Naive thymus-derived CD4-positive, alpha-beta T cell (primary cell): ENCODE measurements at regions of chr1 and their contacts with region 1.

Region 1: GRCh38 chr1:206925106-206925736 is 3.5 kb upstream of the FCMR start:
- DNase-seq: peak in 3 of 9 donors; percentile 25 to 38 (median 37)
- ATAC-seq: peak; percentile 62
- H3K4me3 ChIP-seq: no peak overlapping the region
- H3K4me3 Mint-ChIP-seq: no peak overlapping the region
- H3K27ac ChIP-seq: peak overlapping the region; percentile 90
- H3K27ac Mint-ChIP-seq: no peak overlapping the region
- H3K4me1 ChIP-seq: peaks cover 46 to 51% of the 10 kb centered on the region in 2 donors
- H3K4me1 Mint-ChIP-seq: peaks cover 19 to 37% (median 31%) of the 10 kb centered on the region in 7 donors
- H3K27me3 ChIP-seq: no peaks in the 10 kb centered on the region
- H3K27me3 Mint-ChIP-seq: no peaks in the 10 kb centered on the region

Region 2: DNA sequence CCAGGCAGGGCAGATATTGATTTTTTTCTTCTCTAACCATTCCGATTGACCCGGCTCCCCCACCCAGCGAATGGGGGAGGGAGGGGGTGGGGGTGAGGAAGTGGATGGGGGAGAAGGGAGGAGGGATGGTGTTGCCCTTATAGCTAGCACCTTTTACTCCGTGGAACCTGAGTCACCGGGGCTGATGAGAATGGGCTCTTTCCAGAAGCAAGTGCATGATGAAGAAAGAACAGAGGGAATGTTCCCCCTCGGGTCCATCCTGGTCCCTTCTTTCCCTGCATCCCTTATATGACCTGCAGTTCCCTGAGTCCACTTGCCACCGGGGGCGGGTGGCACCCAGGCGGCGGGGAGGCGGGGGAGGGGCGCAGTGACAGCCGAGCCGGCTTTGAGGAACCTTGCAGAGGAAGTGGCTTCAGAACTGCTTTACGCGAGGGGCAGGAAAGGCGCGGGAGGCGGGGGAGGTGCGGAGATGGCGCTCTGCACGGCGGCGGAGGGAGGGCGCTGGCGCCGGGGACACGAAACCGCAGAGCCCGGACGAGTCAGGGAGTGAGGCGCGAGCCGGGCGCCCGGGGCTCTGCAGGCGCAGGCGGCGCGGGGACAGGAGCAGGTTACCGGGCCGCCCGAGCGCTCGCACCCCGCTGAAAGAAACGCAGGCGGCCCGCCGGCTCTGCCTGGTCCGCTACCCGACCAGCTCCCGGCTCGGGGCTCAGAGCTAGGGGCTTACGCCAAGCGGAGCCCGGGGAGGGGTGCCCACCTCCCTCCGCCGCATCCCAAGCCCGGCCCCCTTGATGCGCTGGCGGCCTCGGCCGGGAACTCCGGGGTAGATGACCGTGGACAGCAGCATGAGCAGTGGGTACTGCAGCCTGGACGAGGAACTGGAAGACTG is 368.2 kb before region 1 on chr1:
- CTCF ChIA-PET with region 1: no interaction called
- POLR2A ChIA-PET with region 1: interaction called, 5 read pairs
- intact Hi-C with region 1: loop called in 1 of 2 experiments (anchors 5 kb)
- DNase-seq: peak; percentile 78 to 93 (median 88)
- ATAC-seq: peak; percentile 86
- H3K4me3 ChIP-seq: peak overlapping the region; percentile 90
- H3K4me3 Mint-ChIP-seq: peak overlapping the region; percentile 77 to 99 (median 96)
- H3K27ac ChIP-seq: peak overlapping the region; percentile 90
- H3K27ac Mint-ChIP-seq: peak overlapping the region; percentile 86 to 100 (median 94)
- H3K4me1 ChIP-seq: peaks cover 61 to 66% of the 10 kb centered on the region in 2 donors
- H3K4me1 Mint-ChIP-seq: peaks cover 59 to 75% (median 70%) of the 10 kb centered on the region in 7 donors
- H3K27me3 ChIP-seq: no peaks in the 10 kb centered on the region
- H3K27me3 Mint-ChIP-seq: no peaks in the 10 kb centered on the region

Region 3: GRCh38 chr1:206734499-206735142 is 190.6 kb before region 1 on chr1:
- CTCF ChIA-PET with region 1: interaction called, 50 read pairs
- POLR2A ChIA-PET with region 1: interaction called, 10 read pairs
- intact Hi-C with region 1: no loop called
- DNase-seq: peak; percentile 63 to 87 (median 76)
- ATAC-seq: peak; percentile 80
- H3K4me3 ChIP-seq: no peak overlapping the region
- H3K4me3 Mint-ChIP-seq: peak overlapping the region in 4 of 10 donors; percentile 7 to 54 (median 26)
- H3K27ac ChIP-seq: no peak overlapping the region
- H3K27ac Mint-ChIP-seq: peak overlapping the region; percentile 53 to 95 (median 87)
- H3K4me1 ChIP-seq: peaks cover 49 to 50% of the 10 kb centered on the region in 2 donors
- H3K4me1 Mint-ChIP-seq: peaks cover 40 to 60% (median 56%) of the 10 kb centered on the region in 7 donors
- H3K27me3 ChIP-seq: no peaks in the 10 kb centered on the region
- H3K27me3 Mint-ChIP-seq: no peaks in the 10 kb centered on the region

Region 4: GRCh38 chr1:206814716-206815341 is 110.4 kb before region 1 on chr1:
- CTCF ChIA-PET with region 1: interaction called, 20 read pairs
- POLR2A ChIA-PET with region 1: interaction called, 13 read pairs
- intact Hi-C with region 1: no loop called
- DNase-seq: no peak
- ATAC-seq: peak; percentile 38
- H3K4me3 ChIP-seq: no peak overlapping the region
- H3K4me3 Mint-ChIP-seq: no peak overlapping the region
- H3K27ac ChIP-seq: no peak overlapping the region
- H3K27ac Mint-ChIP-seq: peak overlapping the region in 7 of 9 donors; percentile 8 to 97 (median 41)
- H3K4me1 ChIP-seq: peaks cover 0 to 14% of the 10 kb centered on the region in 2 donors
- H3K4me1 Mint-ChIP-seq: peaks cover 20 to 53% (median 44%) of the 10 kb centered on the region in 7 donors
- H3K27me3 ChIP-seq: no peaks in the 10 kb centered on the region
- H3K27me3 Mint-ChIP-seq: no peaks in the 10 kb centered on the region

Region 5: DNA sequence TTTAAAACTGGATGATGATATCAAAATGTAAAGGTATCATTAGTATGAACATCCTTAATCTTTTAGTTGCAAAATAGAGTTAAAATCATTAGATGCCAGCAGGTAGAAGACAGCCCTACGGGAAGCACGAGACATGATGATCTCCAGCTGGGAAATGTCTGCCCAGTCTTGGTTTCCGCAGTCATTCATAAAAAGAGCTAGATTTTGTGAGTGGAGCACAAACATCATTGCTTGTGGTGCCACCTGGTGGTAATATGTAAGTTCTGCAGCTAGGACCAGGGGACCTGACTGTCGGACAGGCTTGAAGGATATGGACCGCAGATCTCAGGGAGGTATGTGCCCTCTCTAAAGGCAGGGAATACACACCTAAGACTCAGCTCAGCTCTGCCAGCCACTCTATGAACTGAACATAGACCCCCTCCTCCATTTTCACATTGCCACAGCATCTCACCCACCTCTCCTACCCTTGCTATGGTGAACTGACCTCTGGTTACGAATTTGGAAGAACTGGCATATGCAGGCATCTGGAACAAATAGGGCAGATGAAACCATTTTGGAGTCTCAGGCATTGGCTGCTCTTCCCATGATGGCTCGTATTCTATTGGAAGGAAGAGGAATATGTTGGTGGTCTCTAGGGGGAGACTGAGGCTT is 12.7 kb before region 1 on chr1:
- CTCF ChIA-PET with region 1: interaction called, 343 read pairs
- POLR2A ChIA-PET with region 1: interaction called, 600 read pairs
- intact Hi-C with region 1: loop called (anchors 1 kb)
- DNase-seq: peak; percentile 26 to 73 (median 67)
- ATAC-seq: peak; percentile 73
- H3K4me3 ChIP-seq: no peak overlapping the region
- H3K4me3 Mint-ChIP-seq: peak overlapping the region in 3 of 10 donors; percentile 67 to 85 (median 75)
- H3K27ac ChIP-seq: peak overlapping the region; percentile 90
- H3K27ac Mint-ChIP-seq: peak overlapping the region in 4 of 9 donors; percentile 83 to 96 (median 92)
- H3K4me1 ChIP-seq: peaks cover 59 to 93% of the 10 kb centered on the region in 2 donors
- H3K4me1 Mint-ChIP-seq: peaks cover 73 to 94% (median 92%) of the 10 kb centered on the region in 7 donors
- H3K27me3 ChIP-seq: no peaks in the 10 kb centered on the region
- H3K27me3 Mint-ChIP-seq: peaks cover 0 to 6% (median 0%) of the 10 kb centered on the region in 5 donors

Region 6: GRCh38 chr1:207007352-207008033 is 82.3 kb after region 1 on chr1:
- CTCF ChIA-PET with region 1: no interaction called
- POLR2A ChIA-PET with region 1: no interaction called
- intact Hi-C with region 1: no loop called
- DNase-seq: no peak
- ATAC-seq: no peak
- H3K4me3 ChIP-seq: no peak overlapping the region
- H3K4me3 Mint-ChIP-seq: no peak overlapping the region
- H3K27ac ChIP-seq: no peak overlapping the region
- H3K27ac Mint-ChIP-seq: no peak overlapping the region
- H3K4me1 ChIP-seq: no peaks in the 10 kb centered on the region
- H3K4me1 Mint-ChIP-seq: peaks cover 0 to 8% (median 4%) of the 10 kb centered on the region in 7 donors
- H3K27me3 ChIP-seq: no peaks in the 10 kb centered on the region
- H3K27me3 Mint-ChIP-seq: peaks cover 6 to 42% (median 14%) of the 10 kb centered on the region in 5 donors

Region 7: DNA sequence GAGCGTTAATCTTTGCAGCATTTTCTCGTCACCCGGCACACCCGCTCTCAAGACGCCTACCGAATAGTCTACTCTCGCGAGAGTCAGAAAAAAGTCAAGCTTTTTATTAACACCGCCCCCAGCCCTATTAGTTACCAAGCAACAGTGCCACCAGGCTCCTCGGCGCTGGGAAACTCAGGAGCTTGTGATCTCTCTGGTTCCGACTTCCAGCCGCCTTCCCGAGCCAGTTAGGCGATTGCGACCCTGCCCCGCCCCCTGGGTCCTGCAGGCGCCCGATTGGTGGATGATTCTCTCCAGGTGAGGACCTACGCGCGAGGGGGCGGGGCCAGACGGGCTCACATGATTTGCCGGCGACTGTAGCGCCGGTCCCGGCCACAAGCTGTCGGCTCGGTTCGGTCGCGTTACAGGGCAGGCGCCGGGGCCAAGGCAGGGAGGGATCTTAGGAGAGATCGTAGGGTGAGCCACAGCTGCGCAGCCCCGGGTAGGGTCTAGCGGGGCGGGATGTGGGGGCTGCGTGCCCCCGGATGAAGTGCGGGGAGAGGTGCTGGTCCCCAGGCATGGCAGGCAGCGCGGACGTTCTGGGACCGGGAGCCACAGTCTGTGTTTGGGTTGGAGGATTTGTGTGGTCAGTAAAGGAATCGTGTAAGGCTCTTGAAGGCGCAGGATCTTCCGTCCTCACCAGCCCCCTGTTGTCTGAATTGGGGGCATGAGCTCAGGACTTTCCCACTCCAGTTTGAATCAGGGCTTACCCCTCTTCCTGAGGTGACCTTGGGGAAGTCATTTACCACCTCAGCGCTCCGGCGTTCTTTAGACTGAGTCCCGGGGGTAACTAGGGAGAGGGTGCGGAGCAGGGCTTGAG is 127.9 kb after region 1 on chr1 and contains the start of gene PFKFB2:
- CTCF ChIA-PET with region 1: no interaction called
- POLR2A ChIA-PET with region 1: no interaction called
- intact Hi-C with region 1: loop called (anchors 5 kb)
- DNase-seq: peak; percentile 93 to 97 (median 96)
- ATAC-seq: peak; percentile 93
- H3K4me3 ChIP-seq: peak within 1 kb of the TSS; percentile 85
- H3K4me3 Mint-ChIP-seq: peak within 1 kb of the TSS; percentile 95 to 100 (median 98)
- H3K27ac ChIP-seq: peak within 1 kb of the TSS; percentile 72
- H3K27ac Mint-ChIP-seq: peak within 1 kb of the TSS; percentile 86 to 100 (median 97)
- H3K4me1 ChIP-seq: peaks cover 11 to 16% of the 10 kb centered on the region in 2 donors
- H3K4me1 Mint-ChIP-seq: peaks cover 25 to 54% (median 49%) of the 10 kb centered on the region in 7 donors
- H3K27me3 ChIP-seq: no peaks in the 10 kb centered on the region
- H3K27me3 Mint-ChIP-seq: peaks cover 0 to 12% (median 0%) of the 10 kb centered on the region in 5 donors
- total RNA-seq, gene PFKFB2: 2.3 to 4.6 (median 3.8) TPM